Dorsolateral prefrontal cortex (tissue), 120 donors: ENCODE measurements at regions of chr16 and their contacts with region 1.

Region 1: DNA sequence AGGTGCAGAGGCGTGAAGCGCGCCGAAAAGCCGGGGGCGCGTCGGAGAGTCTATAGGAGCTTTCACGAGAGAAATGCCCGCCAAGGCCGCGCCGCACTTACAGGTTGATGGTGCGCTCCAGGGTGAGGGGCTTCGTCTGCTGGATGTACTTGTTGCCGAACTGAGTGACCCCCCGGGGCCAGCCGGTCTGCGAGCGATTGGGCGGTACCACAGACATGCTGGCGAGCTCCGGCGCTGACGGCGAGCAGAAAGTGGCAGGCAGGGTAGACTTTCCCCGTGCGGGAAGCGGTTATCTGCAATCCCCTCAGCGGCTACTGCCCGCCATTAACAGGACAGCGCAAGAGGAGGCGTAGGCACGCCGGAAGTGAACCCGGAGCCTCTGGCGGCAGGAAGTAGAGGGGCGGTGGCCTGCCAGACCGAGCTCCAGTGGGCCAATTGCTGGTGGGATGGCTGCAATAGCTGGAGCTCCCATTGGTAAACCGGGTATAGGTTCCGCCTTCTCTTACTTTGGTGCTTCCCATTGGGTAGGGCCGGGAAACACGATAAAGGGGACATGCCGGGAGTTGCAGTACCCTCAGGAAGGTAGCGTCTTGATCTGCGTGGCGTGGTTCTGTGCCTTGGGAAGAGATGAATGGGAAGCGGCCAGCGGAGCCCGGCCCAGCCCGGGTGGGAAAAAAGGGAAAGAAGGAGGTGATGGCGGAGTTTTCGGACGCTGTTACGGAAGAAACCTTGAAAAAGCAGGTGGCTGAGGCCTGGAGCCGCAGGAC is at the starts of genes NUDT21 and OGFOD1:
- DNase-seq: peak; percentile 88 to 98 (median 98)
- H3K4me3 ChIP-seq: peak within 1 kb of the TSS; percentile 61 to 100 (median 95)
- H3K27ac ChIP-seq: peak within 1 kb of the TSS in 54 of 59 donors; percentile 13 to 89 (median 76)
- H3K27me3 ChIP-seq: no peaks in the 10 kb centered on the region
- CTCF ChIP-seq: peak in 48 of 56 donors; percentile 10 to 64 (median 42)
- total RNA-seq, gene NUDT21: 78.4 to 168 (median 131) TPM
- total RNA-seq, gene OGFOD1: 22.7 to 51.6 (median 35.8) TPM

Region 2: DNA sequence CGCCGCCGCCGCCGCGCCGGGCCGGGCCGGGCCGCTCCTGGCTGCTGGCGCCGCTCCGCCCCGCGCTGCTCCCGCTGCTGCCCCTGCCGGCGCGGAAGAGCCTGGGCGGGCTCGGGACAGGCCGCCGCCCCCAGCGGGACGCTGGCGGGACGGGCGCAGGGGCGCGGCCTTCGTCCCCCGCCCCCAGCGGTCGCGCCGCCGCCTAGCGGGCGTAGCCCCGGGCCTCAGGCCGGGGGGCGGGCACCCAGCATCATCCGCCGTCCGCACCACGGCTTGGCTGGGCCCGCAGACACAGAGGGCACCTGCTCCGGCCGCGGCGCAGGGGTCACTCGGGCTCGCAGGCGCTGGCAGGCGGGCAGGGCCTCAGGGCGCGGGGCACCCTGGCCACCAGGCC is 25.7 kb before region 1 on chr16 and contains the start of gene AMFR:
- intact Hi-C with region 1: loop called in 1 of 2 experiments (anchors 2 kb)
- DNase-seq: peak in 7 of 10 donors; percentile 28 to 82 (median 49)
- H3K4me3 ChIP-seq: peak within 1 kb of the TSS; percentile 58 to 99 (median 81)
- H3K27ac ChIP-seq: peak within 1 kb of the TSS; percentile 23 to 97 (median 87)
- H3K27me3 ChIP-seq: no peaks in the 10 kb centered on the region
- CTCF ChIP-seq: peak in 55 of 56 donors; percentile 6 to 74 (median 44)
- total RNA-seq, gene AMFR: 103 to 208 (median 129) TPM

Region 3: GRCh38 chr16:56436258-56436657 is 14.9 kb before region 1 on chr16:
- intact Hi-C with region 1: no loop called
- DNase-seq: no peak
- H3K4me3 ChIP-seq: no peak overlapping the region
- H3K27ac ChIP-seq: no peak overlapping the region
- H3K27me3 ChIP-seq: no peaks in the 10 kb centered on the region
- CTCF ChIP-seq: no peak

Region 4: GRCh38 chr16:56589141-56590039 is 138.2 kb after region 1 on chr16 and contains the start of gene MT3:
- intact Hi-C with region 1: loop called in 1 of 2 experiments (anchors 10 kb)
- DNase-seq: peak; percentile 84 to 93 (median 88)
- H3K4me3 ChIP-seq: peak within 1 kb of the TSS; percentile 51 to 94 (median 79)
- H3K27ac ChIP-seq: peak within 1 kb of the TSS; percentile 61 to 99 (median 95)
- H3K27me3 ChIP-seq: no peaks in the 10 kb centered on the region
- CTCF ChIP-seq: peak in 43 of 56 donors; percentile 6 to 61 (median 33)
- total RNA-seq, gene MT3: 739 to 2,436 (median 1,144) TPM